CD8-positive, alpha-beta T cell (primary cell): ENCODE measurements at regions of chr1 and their contacts with region 1.

Region 1: GRCh38 chr1:203006948-203007871 is at the start of gene TMEM183A:
- DNase-seq: peak; percentile 87 to 98 (median 95)
- ATAC-seq: peak; percentile 90
- H3K4me3 ChIP-seq: peak within 1 kb of the TSS; percentile 92 to 97
- H3K4me3 Mint-ChIP-seq: peak within 1 kb of the TSS; percentile 97
- H3K27ac ChIP-seq: peak within 1 kb of the TSS; percentile 95 to 98
- H3K27ac Mint-ChIP-seq: peak within 1 kb of the TSS; percentile 98
- H3K4me1 ChIP-seq: peaks cover 19% of the 10 kb centered on the region
- H3K4me1 Mint-ChIP-seq: peaks cover 39% of the 10 kb centered on the region
- H3K27me3 ChIP-seq: no peaks in the 10 kb centered on the region
- H3K27me3 Mint-ChIP-seq: no peaks in the 10 kb centered on the region
- CTCF ChIP-seq: no peak
- total RNA-seq, gene TMEM183A: 201 to 214 TPM

Region 2: DNA sequence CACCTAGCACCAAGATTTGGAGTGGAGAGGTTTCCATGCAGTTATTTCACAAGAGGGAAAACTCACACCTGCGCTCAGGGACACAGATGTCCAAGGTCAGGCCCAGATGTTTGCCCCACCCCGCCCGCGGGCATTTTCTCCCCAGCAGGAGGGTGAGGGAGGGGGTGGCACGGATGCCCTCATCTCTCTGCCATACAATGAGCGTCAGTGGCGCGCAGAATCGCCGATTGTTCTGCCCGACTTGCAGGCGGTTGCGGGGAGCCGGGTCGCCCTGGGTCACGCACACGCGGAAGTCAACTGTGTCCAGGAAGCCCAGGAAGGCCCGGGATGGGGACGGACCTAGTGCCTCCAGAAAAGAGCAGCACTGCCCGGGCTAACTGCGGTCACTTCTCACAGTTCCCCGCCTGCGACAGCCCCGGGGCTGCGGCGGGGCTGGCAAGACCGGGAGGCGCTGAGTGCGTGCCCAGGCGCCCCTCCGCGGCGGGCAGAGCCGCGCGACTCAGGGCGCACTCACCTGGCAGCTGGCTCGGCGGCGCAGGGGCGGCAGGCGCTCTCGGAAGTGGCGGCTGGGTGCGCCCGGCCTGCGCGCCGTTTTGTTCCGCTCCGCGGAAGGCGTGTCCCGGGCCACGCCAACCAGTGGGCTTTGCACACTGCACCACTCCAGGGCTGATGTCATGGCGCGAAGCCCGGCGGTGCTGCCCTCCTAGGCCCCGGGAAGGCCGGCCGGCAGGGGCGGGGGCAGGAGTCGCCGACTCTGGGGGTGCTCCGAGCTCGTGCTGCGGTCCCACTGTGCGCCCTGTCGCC is 1500.5 kb before region 1 on chr1 and contains the start of gene CSRP1:
- CTCF ChIA-PET with region 1: no interaction called
- POLR2A ChIA-PET with region 1: no interaction called
- intact Hi-C with region 1: loop called in 1 of 2 experiments (anchors 5 kb)
- DNase-seq: peak; percentile 51 to 88 (median 78)
- ATAC-seq: peak; percentile 96
- H3K4me3 ChIP-seq: peak within 1 kb of the TSS; percentile 77 to 94
- H3K4me3 Mint-ChIP-seq: peak within 1 kb of the TSS; percentile 87
- H3K27ac ChIP-seq: peak within 1 kb of the TSS; percentile 65 to 70
- H3K27ac Mint-ChIP-seq: peak within 1 kb of the TSS; percentile 88
- H3K4me1 ChIP-seq: peaks cover 26% of the 10 kb centered on the region
- H3K4me1 Mint-ChIP-seq: peaks cover 50% of the 10 kb centered on the region
- H3K27me3 ChIP-seq: no peaks in the 10 kb centered on the region
- H3K27me3 Mint-ChIP-seq: no peaks in the 10 kb centered on the region
- CTCF ChIP-seq: no peak
- total RNA-seq, gene CSRP1: 31.6 to 33.9 TPM

Region 3: DNA sequence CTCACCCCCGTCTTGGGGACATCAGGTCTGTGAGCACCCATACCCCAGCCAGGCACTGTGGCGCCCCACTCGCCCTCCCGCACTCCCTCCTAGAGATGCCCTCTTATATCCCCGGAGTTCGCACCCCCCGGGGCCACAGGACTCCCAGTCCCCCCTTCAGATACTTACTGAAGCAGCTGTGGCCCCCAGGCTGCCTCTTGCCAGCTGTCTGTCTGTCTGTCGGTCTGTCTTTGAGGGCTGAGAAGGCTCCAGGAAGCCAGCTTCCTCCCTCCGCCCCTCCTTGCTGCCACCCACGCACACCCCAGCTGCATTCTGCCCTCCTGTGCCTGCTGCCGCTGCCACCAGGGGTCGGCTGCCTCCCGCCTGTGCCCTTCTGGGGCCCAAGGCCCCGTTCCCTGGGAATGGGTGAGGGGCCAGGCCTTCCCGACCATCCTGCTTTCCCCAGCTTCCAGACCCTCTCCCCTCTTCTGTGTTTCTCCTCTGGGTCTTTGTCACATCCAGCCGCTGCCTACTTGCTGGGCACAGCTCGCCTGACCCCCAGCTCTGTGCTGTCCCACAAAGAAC is 846.8 kb before region 1 on chr1 and contains the start of gene PTPN7:
- CTCF ChIA-PET with region 1: no interaction called
- POLR2A ChIA-PET with region 1: no interaction called
- intact Hi-C with region 1: loop called in 1 of 2 experiments (anchors 10 kb)
- DNase-seq: peak; percentile 65 to 90 (median 86)
- ATAC-seq: peak; percentile 67
- H3K4me3 ChIP-seq: peak within 1 kb of the TSS; percentile 66 to 94
- H3K4me3 Mint-ChIP-seq: peak within 1 kb of the TSS; percentile 87
- H3K27ac ChIP-seq: peak within 1 kb of the TSS; percentile 78 to 99
- H3K27ac Mint-ChIP-seq: peak within 1 kb of the TSS; percentile 91
- H3K4me1 ChIP-seq: peaks cover 86% of the 10 kb centered on the region
- H3K4me1 Mint-ChIP-seq: peaks cover 78% of the 10 kb centered on the region
- H3K27me3 ChIP-seq: no peaks in the 10 kb centered on the region
- H3K27me3 Mint-ChIP-seq: no peaks in the 10 kb centered on the region
- CTCF ChIP-seq: peak; percentile 59
- total RNA-seq, gene PTPN7: 106 to 108 TPM

Region 4: DNA sequence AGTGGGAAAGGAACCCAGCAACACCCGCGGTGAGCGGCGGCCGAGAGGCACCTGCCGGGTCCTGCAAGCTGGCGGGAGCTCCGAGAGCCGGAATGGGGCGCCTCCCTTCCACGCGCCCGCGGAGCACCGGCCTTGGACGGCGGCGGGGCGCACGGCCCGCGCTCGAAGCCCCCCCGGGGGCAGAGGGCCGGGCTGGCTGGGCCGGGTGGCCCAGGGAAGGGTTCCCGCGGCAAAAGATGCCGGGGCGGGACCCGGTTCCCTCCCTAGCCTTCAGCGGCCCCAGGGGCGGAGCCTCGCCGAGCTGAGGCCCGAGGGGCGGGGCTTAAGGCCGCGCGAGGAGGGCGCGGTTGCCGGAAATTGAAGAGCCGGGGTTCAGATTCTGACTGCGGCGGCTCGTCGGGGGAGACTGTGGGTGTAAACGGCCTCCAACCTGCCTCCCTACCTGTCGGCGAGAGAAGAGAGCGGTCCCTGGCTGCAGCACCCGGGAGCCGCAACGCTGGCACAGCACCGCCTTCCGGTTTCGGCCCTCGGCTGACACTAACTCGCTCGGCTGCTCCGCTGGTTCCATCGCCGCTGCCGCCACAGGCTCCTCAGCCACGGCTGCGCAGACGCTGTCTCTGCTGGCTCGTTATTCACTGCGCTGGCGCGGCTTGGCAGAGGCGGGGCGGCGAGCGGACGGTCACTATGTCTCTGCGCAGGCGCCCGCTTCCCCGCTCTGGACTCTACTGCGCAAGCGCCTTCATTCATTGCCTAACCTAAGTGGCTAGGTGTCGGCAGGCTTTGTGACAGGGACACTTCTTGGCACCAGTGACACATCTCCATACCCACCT is 118.5 kb before region 1 on chr1 and contains the start of gene RABIF:
- CTCF ChIA-PET with region 1: no interaction called
- POLR2A ChIA-PET with region 1: interaction called, 7 read pairs
- intact Hi-C with region 1: loop called in 1 of 2 experiments (anchors 2 kb)
- DNase-seq: peak; percentile 91 to 98 (median 96)
- ATAC-seq: peak; percentile 92
- H3K4me3 ChIP-seq: peak within 1 kb of the TSS; percentile 84 to 97
- H3K4me3 Mint-ChIP-seq: peak within 1 kb of the TSS; percentile 94
- H3K27ac ChIP-seq: peak within 1 kb of the TSS; percentile 92 to 94
- H3K27ac Mint-ChIP-seq: peak within 1 kb of the TSS; percentile 96
- H3K4me1 ChIP-seq: peaks cover 18% of the 10 kb centered on the region
- H3K4me1 Mint-ChIP-seq: peaks cover 30% of the 10 kb centered on the region
- H3K27me3 ChIP-seq: no peaks in the 10 kb centered on the region
- H3K27me3 Mint-ChIP-seq: no peaks in the 10 kb centered on the region
- CTCF ChIP-seq: no peak
- total RNA-seq, gene RABIF: 10.1 to 10.8 TPM

Region 5: GRCh38 chr1:202957733-202958543 is 49.3 kb before region 1 on chr1 and contains the start of gene ADIPOR1:
- CTCF ChIA-PET with region 1: no interaction called
- POLR2A ChIA-PET with region 1: interaction called, 4 read pairs
- intact Hi-C with region 1: loop called (anchors 1 kb)
- DNase-seq: peak; percentile 89 to 96 (median 94)
- ATAC-seq: peak; percentile 97
- H3K4me3 ChIP-seq: peak within 1 kb of the TSS; percentile 89 to 93
- H3K4me3 Mint-ChIP-seq: peak within 1 kb of the TSS; percentile 81
- H3K27ac ChIP-seq: peak within 1 kb of the TSS; percentile 89 to 94
- H3K27ac Mint-ChIP-seq: peak within 1 kb of the TSS; percentile 92
- H3K4me1 ChIP-seq: peaks cover 36% of the 10 kb centered on the region
- H3K4me1 Mint-ChIP-seq: peaks cover 46% of the 10 kb centered on the region
- H3K27me3 ChIP-seq: no peaks in the 10 kb centered on the region
- H3K27me3 Mint-ChIP-seq: no peaks in the 10 kb centered on the region
- CTCF ChIP-seq: no peak
- total RNA-seq, gene ADIPOR1: 106 to 117 TPM

Region 6: DNA sequence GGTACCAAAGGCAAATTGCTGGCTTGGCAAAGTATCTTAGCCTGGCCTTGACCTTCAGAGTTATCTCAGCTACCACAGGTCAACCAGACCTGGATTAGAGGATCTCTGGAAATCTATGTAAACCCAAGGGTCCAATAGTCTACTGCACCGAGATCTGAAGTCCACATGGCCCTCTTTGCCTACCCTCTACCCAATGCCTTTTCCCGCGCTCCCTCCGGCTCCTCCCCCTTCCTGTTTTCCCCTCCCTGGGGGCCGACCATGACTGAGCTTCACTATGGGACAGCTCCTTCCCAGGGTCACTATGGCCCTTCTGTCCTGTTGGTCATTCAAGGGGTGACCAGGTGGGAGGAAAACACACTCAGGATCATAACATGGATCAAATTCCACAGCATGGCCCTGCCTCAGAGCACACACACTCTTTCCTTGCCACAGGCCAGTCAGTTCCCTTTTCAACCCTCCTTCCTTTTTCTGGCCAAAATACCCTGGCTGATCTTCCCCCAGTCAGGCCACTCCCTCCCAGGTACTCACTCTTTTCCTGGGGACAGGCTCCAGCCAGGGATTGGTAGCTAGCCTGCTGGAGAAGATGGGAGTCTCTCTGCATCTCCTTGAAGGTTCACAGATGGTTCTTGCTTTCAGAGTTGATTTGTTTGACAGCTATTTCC is 19.2 kb before region 1 on chr1:
- CTCF ChIA-PET with region 1: no interaction called
- POLR2A ChIA-PET with region 1: interaction called, 10 read pairs
- intact Hi-C with region 1: no loop called
- DNase-seq: no peak
- ATAC-seq: no peak
- H3K4me3 ChIP-seq: no peak overlapping the region
- H3K4me3 Mint-ChIP-seq: no peak overlapping the region
- H3K27ac ChIP-seq: no peak overlapping the region
- H3K27ac Mint-ChIP-seq: no peak overlapping the region
- H3K4me1 ChIP-seq: no peaks in the 10 kb centered on the region
- H3K4me1 Mint-ChIP-seq: no peaks in the 10 kb centered on the region
- H3K27me3 ChIP-seq: peaks cover 0 to 3% of the 10 kb centered on the region in 2 experiments
- H3K27me3 Mint-ChIP-seq: peaks cover 20% of the 10 kb centered on the region
- CTCF ChIP-seq: no peak